Naive thymus-derived CD8-positive, alpha-beta T cell (primary cell): ENCODE measurements at regions of chr5 and their contacts with region 1.

Region 1: DNA sequence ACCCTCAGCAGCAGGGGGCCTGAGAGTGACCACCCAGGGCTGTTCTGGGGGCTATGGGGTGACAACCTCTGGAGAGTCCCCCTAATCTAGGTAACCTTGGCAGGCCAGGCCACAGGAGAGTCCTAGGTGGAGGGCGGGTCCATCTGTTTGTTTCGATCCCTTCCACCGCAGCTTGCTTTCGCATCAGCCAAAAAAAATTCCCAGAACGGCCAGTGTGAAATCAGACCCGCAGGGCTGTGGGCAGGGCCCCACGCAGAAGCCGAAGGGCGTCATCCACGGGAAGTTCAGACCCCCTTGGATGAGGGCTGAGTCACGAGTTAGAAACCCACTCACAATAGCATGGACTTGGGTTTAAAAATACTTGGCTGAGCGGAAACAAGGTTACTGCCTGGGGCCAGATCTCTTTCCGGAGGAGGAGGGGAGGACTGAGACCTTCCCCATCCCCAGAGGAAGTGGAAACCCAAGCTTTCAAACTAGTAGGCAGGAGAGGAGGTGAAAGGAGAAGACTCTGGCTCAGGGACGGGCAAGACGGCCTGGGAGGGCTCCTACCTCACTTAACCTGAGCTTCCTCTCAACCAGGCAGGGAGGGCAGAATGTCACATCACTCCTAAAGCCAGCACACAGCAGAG is 8.5 kb downstream of the STK10 start:
- DNase-seq: peak; percentile 28 to 68 (median 52)
- ATAC-seq: peak; percentile 4 to 12
- H3K4me3 Mint-ChIP-seq: peak overlapping the region; percentile 78 to 100 (median 93)
- H3K27ac Mint-ChIP-seq: peak overlapping the region; percentile 96 to 100 (median 99)
- H3K4me1 Mint-ChIP-seq: peaks cover 46 to 99% (median 90%) of the 10 kb centered on the region in 4 donors
- H3K27me3 Mint-ChIP-seq: no peaks in the 10 kb centered on the region

Region 2: GRCh38 chr5:172006321-172007174 is 172.9 kb before region 1 on chr5 and contains the start of gene FBXW11:
- POLR2A ChIA-PET with region 1: interaction called, 43 read pairs
- DNase-seq: peak; percentile 86 to 98 (median 93)
- ATAC-seq: peak; percentile 87 to 89
- H3K4me3 Mint-ChIP-seq: peak within 1 kb of the TSS; percentile 93 to 100 (median 98)
- H3K27ac Mint-ChIP-seq: peak within 1 kb of the TSS; percentile 98 to 100 (median 99)
- H3K4me1 Mint-ChIP-seq: peaks cover 34 to 53% (median 51%) of the 10 kb centered on the region in 4 donors
- H3K27me3 Mint-ChIP-seq: no peaks in the 10 kb centered on the region
- polyA plus RNA-seq, gene FBXW11: 13.5 to 18.3 (median 16.2) TPM

Region 3: DNA sequence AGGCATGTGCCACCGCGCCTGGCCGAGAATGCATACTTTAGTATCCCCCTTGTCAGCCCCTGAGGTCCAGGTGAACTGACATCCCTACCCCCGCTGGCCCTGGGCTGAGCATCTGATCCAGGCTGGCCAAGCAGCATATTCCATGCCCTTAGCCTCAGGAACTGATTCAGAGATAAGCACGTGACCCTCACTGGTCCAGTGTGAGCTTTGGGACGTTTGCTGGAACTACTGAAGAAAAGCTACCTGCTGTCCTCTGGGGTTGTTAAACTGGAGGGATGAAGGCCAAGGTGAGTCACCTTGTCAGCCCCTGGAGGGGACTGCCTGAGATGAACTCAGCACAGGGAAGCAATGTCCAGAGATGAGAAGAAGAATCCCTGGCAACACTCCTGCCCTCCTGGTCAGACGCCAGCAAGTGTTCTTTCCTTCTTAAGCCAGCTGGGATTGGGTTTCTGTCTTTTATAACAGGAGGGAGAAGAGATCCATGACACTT is 113.9 kb before region 1 on chr5:
- POLR2A ChIA-PET with region 1: interaction called, 55 read pairs
- DNase-seq: no peak
- ATAC-seq: no peak
- H3K4me3 Mint-ChIP-seq: peak overlapping the region in 9 of 10 donors; percentile 8 to 88 (median 77)
- H3K27ac Mint-ChIP-seq: peak overlapping the region; percentile 92 to 99 (median 96)
- H3K4me1 Mint-ChIP-seq: peaks cover 38 to 76% (median 73%) of the 10 kb centered on the region in 4 donors
- H3K27me3 Mint-ChIP-seq: no peaks in the 10 kb centered on the region

Region 4: GRCh38 chr5:172106511-172107356 is 72.7 kb before region 1 on chr5:
- POLR2A ChIA-PET with region 1: interaction called, 359 read pairs
- DNase-seq: peak; percentile 39 to 81 (median 64)
- ATAC-seq: peak; percentile 17 to 18
- H3K4me3 Mint-ChIP-seq: peak overlapping the region in 9 of 10 donors; percentile 4 to 69 (median 38)
- H3K27ac Mint-ChIP-seq: peak overlapping the region; percentile 55 to 93 (median 88)
- H3K4me1 Mint-ChIP-seq: peaks cover 21 to 61% (median 50%) of the 10 kb centered on the region in 4 donors
- H3K27me3 Mint-ChIP-seq: no peaks in the 10 kb centered on the region

Region 5: GRCh38 chr5:172150514-172151425 is 28.7 kb before region 1 on chr5:
- POLR2A ChIA-PET with region 1: interaction called, 31 read pairs
- DNase-seq: peak in 5 of 10 donors; percentile 13 to 37 (median 26)
- ATAC-seq: peak; percentile 74 to 76
- H3K4me3 Mint-ChIP-seq: peak overlapping the region; percentile 44 to 76 (median 67)
- H3K27ac Mint-ChIP-seq: peak overlapping the region; percentile 86 to 98 (median 94)
- H3K4me1 Mint-ChIP-seq: peaks cover 39 to 90% (median 84%) of the 10 kb centered on the region in 4 donors
- H3K27me3 Mint-ChIP-seq: no peaks in the 10 kb centered on the region

Region 6: DNA sequence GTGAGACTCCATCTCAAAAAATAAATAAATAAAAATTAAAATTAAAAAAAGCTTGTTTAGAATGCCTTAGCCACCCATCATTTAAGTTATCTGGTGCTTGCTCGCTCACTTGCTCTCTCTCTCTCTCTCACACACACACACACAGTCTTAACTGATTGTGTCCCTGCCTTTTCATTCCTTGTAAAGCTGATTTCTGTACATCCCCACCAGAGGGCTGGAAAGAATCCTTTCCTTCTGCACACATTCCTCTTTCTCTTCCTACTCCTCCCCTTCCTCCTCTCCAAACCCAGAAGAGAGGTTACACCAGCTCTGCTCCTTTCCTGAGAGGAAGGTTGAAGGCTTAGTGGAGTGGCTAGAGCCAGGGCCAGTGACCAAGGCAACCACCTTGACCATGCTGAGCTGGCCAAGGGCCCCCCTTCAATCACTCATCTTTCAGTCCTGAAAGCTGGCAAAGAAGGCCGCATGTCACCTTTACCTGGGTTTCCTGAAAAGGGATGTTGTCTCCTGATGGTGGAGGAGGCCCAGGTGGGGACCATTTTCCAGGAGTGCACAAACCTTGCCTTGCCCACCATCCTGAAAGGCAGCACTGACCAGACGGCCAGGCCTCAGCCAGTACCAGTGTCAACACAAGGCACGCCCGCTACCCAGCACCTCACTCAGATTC is 17.0 kb before region 1 on chr5:
- POLR2A ChIA-PET with region 1: interaction called, 93 read pairs
- DNase-seq: no peak
- ATAC-seq: no peak
- H3K4me3 Mint-ChIP-seq: peak overlapping the region in 7 of 10 donors; percentile 5 to 65 (median 47)
- H3K27ac Mint-ChIP-seq: peak overlapping the region; percentile 13 to 92 (median 82)
- H3K4me1 Mint-ChIP-seq: peaks cover 38 to 87% (median 83%) of the 10 kb centered on the region in 4 donors
- H3K27me3 Mint-ChIP-seq: no peaks in the 10 kb centered on the region

Region 7: GRCh38 chr5:172199446-172199845 is 20.0 kb after region 1 on chr5:
- POLR2A ChIA-PET with region 1: no interaction called
- DNase-seq: no peak
- ATAC-seq: no peak
- H3K4me3 Mint-ChIP-seq: no peak overlapping the region
- H3K27ac Mint-ChIP-seq: peak overlapping the region in 1 of 10 donors; percentile 4
- H3K4me1 Mint-ChIP-seq: peaks cover 0 to 7% (median under 1%) of the 10 kb centered on the region in 4 donors
- H3K27me3 Mint-ChIP-seq: peaks cover 0 to 4% (median 2%) of the 10 kb centered on the region in 5 donors